Ascending aorta (tissue), 2 donors: ENCODE measurements at regions of chr1 and their contacts with region 1.

Region 1: DNA sequence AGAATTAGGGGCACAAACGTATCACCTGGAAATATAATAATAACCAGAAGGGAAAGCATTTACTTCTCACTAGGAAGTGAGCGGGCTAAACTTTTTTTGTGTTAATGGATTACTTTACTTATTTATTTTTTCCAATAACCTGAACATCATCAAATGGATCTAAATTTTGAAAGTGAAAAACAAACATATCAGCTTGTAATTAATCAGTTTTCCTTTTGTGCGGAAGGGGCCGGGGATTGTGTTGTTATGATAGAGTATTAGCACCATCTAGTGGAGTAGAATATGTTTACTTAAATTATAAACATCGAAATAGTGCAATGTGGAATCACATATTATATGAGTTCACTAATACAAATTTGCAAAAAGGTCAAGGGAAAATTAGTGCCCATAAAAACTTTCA is 9.0 kb downstream of the CFH start:
- DNase-seq: no peak
- H3K4me3 ChIP-seq: no peak overlapping the region
- H3K27ac ChIP-seq: no peak overlapping the region
- H3K4me1 ChIP-seq: no peaks in the 10 kb centered on the region
- H3K27me3 ChIP-seq: no peaks in the 10 kb centered on the region
- CTCF ChIP-seq: peak; percentile 33 to 50 (median 37)

Region 2: DNA sequence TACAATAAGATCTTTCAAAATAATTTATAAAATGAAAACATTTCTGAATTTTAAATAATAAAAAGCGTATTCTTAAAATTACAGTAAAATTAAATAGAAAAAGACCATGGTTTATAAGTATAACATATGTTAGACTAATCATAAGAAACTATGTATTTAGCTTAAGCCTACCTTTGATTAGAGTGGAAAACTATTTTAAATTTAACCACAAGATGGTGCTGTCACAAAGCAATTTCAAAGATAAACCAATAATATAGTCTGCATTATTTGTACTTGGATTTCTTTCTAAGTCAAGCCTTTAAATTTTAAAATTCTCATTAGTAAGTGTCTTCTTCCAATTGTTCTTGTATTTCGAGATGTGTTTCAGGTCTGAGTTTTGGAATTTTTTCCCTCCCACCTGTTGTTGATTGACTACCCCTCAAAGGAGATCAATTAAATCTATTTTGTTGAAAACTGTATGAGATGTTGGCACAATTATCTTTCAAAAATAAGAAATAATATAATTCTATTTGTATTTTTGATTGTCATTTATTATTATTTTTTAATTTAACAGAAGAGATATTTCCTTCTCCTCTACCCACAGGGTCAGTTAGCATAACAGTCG is 512.4 kb before region 1 on chr1:
- intact Hi-C with region 1: loop called (anchors 2 kb)
- DNase-seq: no peak
- H3K4me3 ChIP-seq: no peak overlapping the region
- H3K27ac ChIP-seq: no peak overlapping the region
- H3K4me1 ChIP-seq: no peaks in the 10 kb centered on the region
- H3K27me3 ChIP-seq: no peaks in the 10 kb centered on the region
- CTCF ChIP-seq: peak; percentile 7 to 56 (median 28)

Region 3: DNA sequence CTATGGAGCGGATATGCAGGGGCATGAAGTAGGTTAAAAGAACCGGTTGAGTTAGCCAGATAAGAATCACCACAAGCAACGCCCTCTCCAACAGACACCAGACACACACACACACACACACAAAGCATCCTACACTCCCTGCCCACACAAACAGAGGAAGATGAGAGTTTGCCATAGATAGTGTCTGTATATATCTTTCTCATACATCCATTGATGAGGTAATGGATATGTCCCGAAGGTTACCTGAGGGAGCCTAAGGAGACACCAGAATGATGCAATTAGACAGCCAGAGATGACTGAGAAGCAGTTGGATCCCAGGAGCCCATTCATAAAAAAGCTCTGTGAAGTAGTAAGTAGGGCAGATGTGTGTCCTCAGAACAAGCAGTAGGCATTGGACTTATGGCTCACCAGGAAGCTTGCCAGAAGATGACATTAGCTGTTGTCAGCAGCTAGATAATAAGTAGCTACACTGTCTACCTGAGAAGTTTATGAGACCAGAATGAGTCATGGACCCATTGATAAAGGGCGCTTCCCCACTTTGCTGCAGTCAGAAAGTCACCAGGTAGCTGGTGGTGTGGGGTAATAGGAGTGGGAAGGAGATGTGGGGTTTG is 299.6 kb before region 1 on chr1:
- intact Hi-C with region 1: loop called (anchors 5 kb)
- DNase-seq: no peak
- H3K4me3 ChIP-seq: no peak overlapping the region
- H3K27ac ChIP-seq: no peak overlapping the region
- H3K4me1 ChIP-seq: no peaks in the 10 kb centered on the region
- H3K27me3 ChIP-seq: no peaks in the 10 kb centered on the region
- CTCF ChIP-seq: no peak

Region 4: GRCh38 chr1:196861429-196861828 is 200.6 kb after region 1 on chr1:
- intact Hi-C with region 1: no loop called
- DNase-seq: no peak
- H3K4me3 ChIP-seq: no peak overlapping the region
- H3K27ac ChIP-seq: no peak overlapping the region
- H3K4me1 ChIP-seq: no peaks in the 10 kb centered on the region
- H3K27me3 ChIP-seq: no peaks in the 10 kb centered on the region
- CTCF ChIP-seq: no peak